CD4-positive, alpha-beta T cell (primary cell): ENCODE measurements at regions of chr14 and their contacts with region 1.

Region 1: DNA sequence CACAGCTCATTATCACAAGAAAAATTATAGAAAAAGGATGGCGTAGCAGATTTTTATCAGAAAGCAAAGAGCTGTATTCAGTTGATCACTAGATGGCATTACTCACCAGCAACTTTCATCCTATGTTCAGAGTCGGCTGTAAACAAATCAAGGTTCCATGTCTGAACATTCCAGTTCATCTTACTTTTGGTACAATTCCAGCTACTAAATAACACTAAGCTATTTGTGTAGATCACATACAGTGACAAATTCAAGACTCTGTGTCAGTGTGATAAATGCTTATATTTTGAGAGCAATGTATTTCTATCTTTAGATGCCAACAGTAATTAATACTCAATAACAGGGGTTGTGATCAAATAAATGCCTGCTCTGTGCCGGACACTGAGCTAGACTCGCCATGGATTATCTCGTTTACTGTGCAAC is 30.1 kb downstream of the NRDE2 start:
- DNase-seq: peak in 3 of 14 experiments; percentile 23 to 38 (median 29)
- ATAC-seq: no peak
- H3K4me3 ChIP-seq: no peak overlapping the region
- H3K4me3 Mint-ChIP-seq: no peak overlapping the region
- H3K27ac ChIP-seq: no peak overlapping the region
- H3K27ac Mint-ChIP-seq: peak overlapping the region; percentile 16
- H3K4me1 ChIP-seq: peaks cover 5% of the 10 kb centered on the region
- H3K4me1 Mint-ChIP-seq: peaks cover 19% of the 10 kb centered on the region
- H3K27me3 ChIP-seq: no peaks in the 10 kb centered on the region
- H3K27me3 Mint-ChIP-seq: no peaks in the 10 kb centered on the region
- CTCF ChIP-seq: no peak

Region 2: DNA sequence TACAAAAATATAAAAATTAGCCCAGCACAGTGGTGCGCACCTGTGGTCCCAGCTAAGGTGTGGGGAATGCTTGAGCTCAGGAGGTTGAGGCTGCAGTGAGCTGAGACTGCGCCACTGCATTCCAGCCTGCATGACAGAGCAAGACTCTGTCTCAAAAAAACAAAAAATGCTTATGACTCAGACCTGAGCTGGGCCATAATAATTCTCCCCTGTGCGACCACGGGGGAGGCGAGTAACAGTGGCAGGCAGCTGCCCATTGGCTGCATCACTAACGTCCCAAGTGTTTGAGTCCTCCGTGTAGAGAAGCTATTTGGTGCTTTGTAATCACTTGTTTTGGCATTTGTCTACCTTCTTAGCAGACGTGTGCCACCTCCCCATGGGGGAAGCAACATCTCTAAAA is 20.4 kb before region 1 on chr14:
- CTCF ChIA-PET with region 1: no interaction called
- POLR2A ChIA-PET with region 1: no interaction called
- intact Hi-C with region 1: no loop called
- DNase-seq: no peak
- ATAC-seq: no peak
- H3K4me3 ChIP-seq: no peak overlapping the region
- H3K4me3 Mint-ChIP-seq: no peak overlapping the region
- H3K27ac ChIP-seq: no peak overlapping the region
- H3K27ac Mint-ChIP-seq: no peak overlapping the region
- H3K4me1 ChIP-seq: no peaks in the 10 kb centered on the region
- H3K4me1 Mint-ChIP-seq: no peaks in the 10 kb centered on the region
- H3K27me3 ChIP-seq: no peaks in the 10 kb centered on the region
- H3K27me3 Mint-ChIP-seq: no peaks in the 10 kb centered on the region
- CTCF ChIP-seq: no peak

Region 3: DNA sequence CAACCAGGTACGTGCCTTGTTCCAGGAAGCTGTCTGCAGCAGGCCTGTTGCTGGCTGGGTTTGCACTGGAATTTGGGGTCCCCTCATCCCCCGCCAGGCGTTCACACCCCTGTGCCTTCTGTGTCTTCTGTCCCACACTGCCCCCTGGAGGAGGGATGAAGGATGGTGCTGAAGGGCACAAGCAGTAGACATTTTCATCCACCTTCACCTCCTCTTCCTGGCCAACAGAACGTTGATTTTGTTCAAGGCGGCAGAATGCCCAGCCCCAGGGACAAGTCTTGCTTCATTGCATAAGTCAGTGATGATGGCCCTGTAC is 217.2 kb after region 1 on chr14:
- CTCF ChIA-PET with region 1: no interaction called
- POLR2A ChIA-PET with region 1: no interaction called
- intact Hi-C with region 1: loop called in 1 of 2 experiments (anchors 5 kb)
- DNase-seq: peak; percentile 6 to 75 (median 26)
- ATAC-seq: no peak
- H3K4me3 ChIP-seq: no peak overlapping the region
- H3K4me3 Mint-ChIP-seq: no peak overlapping the region
- H3K27ac ChIP-seq: no peak overlapping the region
- H3K27ac Mint-ChIP-seq: no peak overlapping the region
- H3K4me1 ChIP-seq: peaks cover 5% of the 10 kb centered on the region
- H3K4me1 Mint-ChIP-seq: no peaks in the 10 kb centered on the region
- H3K27me3 ChIP-seq: peaks cover 0 to 3% of the 10 kb centered on the region in 2 experiments
- H3K27me3 Mint-ChIP-seq: no peaks in the 10 kb centered on the region
- CTCF ChIP-seq: peak; percentile 50

Region 4: DNA sequence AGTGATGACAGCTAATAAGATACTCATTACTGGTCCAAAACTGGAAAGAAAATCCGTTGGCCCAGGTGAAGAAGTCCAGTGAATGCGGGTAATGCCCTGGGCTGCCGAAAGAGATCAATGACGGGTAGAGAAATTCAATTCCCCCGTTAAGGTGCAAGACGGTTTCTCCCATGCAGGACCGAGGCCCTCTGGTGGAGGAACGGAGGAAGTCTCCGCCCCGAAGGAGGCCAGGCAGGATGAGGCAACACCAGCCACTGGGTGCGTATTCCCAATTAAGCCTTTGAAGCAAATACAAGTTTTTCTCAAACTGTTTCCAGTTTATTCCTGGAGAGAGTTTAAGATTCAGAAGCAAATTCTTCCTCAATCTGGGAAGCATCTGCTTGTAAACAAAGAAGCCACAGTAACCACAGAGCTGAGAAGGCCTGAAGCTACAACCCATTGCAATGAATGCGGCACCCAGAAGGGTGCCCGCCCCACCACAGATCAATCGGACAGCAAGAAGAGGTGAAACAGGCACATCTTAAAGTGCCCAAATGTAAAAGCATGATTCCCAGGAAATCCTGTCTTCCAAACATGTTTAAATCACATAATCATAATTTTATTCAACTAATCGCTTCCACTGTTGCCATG is 396.0 kb after region 1 on chr14:
- CTCF ChIA-PET with region 1: interaction called, 5 read pairs
- POLR2A ChIA-PET with region 1: no interaction called
- intact Hi-C with region 1: loop called (anchors 1 to 2 kb)
- DNase-seq: peak; percentile 61 to 82 (median 71)
- ATAC-seq: peak; percentile 97
- H3K4me3 ChIP-seq: no peak overlapping the region
- H3K4me3 Mint-ChIP-seq: no peak overlapping the region
- H3K27ac ChIP-seq: no peak overlapping the region
- H3K27ac Mint-ChIP-seq: no peak overlapping the region
- H3K4me1 ChIP-seq: peaks cover 6% of the 10 kb centered on the region
- H3K4me1 Mint-ChIP-seq: no peaks in the 10 kb centered on the region
- H3K27me3 ChIP-seq: no peaks in the 10 kb centered on the region
- H3K27me3 Mint-ChIP-seq: no peaks in the 10 kb centered on the region
- CTCF ChIP-seq: peak; percentile 94